GM12878 (cell line): ENCODE measurements at regions of chr5 and their contacts with region 1.

Region 1: GRCh38 chr5:10489810-10490426 is 48.2 kb downstream of the ROPN1L start:
- DNase-seq: peak; percentile 37
- ATAC-seq: peak; percentile 95
- H3K4me3 ChIP-seq: peak overlapping the region; percentile 3; the same call in 1 of the 2 replicates
- H3K27ac ChIP-seq: no peak overlapping the region
- H3K4me1 ChIP-seq: peaks cover 30% of the 10 kb centered on the region
- H3K27me3 ChIP-seq: no peaks in the 10 kb centered on the region
- CTCF ChIP-seq: no peak
- EP300 ChIP-seq: no peak
- POLR2A ChIP-seq: no peak
- RAD21 ChIP-seq: peak; percentile 15; the same call in 1 of the 2 replicates

Region 2: DNA sequence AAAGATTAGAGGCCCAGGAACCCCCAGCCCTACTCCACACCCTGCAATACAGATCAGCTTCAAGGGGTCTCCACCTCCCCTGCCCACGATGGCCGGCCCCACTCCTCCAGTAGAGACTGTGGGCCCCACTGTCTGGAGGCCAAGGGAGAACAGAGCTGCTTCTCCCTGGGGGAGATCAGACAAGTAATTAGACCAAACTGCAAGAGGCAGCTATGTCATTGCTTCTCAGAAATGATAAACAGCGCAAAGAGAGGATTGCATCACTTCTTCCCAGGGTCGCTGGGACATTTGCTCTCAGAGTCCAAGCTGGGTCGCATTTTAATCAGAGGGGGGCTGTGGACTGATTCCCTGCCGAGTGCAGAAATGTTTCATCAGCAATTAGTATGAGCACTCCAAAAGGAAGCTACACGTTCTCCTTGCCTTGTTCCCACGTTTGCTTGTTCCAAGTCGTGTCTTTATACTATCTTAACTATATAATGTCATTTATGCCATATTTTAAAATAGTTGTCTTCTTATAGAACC is 11.7 kb after region 1 on chr5:
- CTCF ChIA-PET with region 1: interaction called, 4 read pairs
- POLR2A ChIA-PET with region 1: no interaction called
- RAD21 ChIA-PET with region 1: interaction called, 3 read pairs
- SMC1A ChIA-PET with region 1: interaction called, 10 read pairs
- in situ Hi-C with region 1: no loop called
- intact Hi-C with region 1: no loop called
- DNase-seq: no peak
- ATAC-seq: no peak
- H3K4me3 ChIP-seq: no peak overlapping the region
- H3K27ac ChIP-seq: no peak overlapping the region
- H3K4me1 ChIP-seq: peaks cover 5% of the 10 kb centered on the region
- H3K27me3 ChIP-seq: no peaks in the 10 kb centered on the region
- CTCF ChIP-seq: no peak
- EP300 ChIP-seq: no peak
- POLR2A ChIP-seq: no peak
- RAD21 ChIP-seq: no peak

Region 3: DNA sequence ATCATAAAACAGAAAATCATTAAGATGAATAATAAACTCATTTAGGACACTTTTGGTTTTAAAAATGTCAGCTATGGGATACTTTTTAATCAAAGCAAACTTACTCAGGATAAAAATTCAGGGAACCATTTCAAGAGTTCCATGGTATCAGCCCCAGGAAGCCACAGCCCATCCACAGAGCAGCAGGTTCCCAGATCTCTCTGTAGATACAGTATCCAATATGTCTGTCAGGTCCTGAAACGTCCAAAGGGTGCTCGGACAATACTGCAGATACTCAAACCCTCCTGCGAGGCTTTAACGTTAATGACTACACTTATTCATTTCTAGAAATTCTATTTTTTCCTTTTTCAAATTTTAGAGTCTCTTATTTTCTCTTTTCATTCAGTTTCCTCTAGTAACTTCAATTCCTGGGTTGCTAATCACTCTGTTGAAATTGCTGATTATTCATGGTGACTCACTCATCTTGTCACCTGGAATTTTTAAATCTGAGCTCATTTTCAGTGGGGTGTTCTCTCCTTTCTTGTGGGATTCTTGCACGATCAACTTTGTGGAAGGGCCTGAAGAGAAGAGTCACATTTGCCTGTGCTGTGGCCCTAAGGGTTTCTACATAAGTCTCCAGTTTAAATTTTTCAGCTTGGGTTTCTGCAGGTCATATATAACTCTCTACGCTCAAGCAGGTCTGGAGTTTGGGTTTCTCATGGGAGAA is 978.6 kb after region 1 on chr5:
- CTCF ChIA-PET with region 1: no interaction called
- POLR2A ChIA-PET with region 1: no interaction called
- RAD21 ChIA-PET with region 1: no interaction called
- SMC1A ChIA-PET with region 1: no interaction called
- in situ Hi-C with region 1: no loop called
- intact Hi-C with region 1: no loop called
- DNase-seq: no peak
- ATAC-seq: no peak
- H3K4me3 ChIP-seq: no peak overlapping the region
- H3K27ac ChIP-seq: no peak overlapping the region
- H3K4me1 ChIP-seq: no peaks in the 10 kb centered on the region
- H3K27me3 ChIP-seq: no peaks in the 10 kb centered on the region
- CTCF ChIP-seq: no peak
- EP300 ChIP-seq: no peak
- POLR2A ChIP-seq: no peak
- RAD21 ChIP-seq: no peak